H1 (cell line): ENCODE measurements at regions of chr2 and their contacts with region 1.

Region 1: GRCh38 chr2:98568881-98569793 is 39.2 kb downstream of the COA5 start:
- DNase-seq: peak; percentile 19 to 96
- H3K4me3 ChIP-seq: no peak overlapping the region
- H3K27ac ChIP-seq: no peak overlapping the region
- H3K4me1 ChIP-seq: no peaks in the 10 kb centered on the region
- H3K27me3 ChIP-seq: no peaks in the 10 kb centered on the region
- CTCF ChIP-seq: peak in 2 of 3 experiments; percentile 93 to 97; a peak in 3 of 4 replicates
- EP300 ChIP-seq: no peak
- POLR2A ChIP-seq: no peak
- RAD21 ChIP-seq: peak; percentile 59 to 69

Region 2: GRCh38 chr2:98583816-98584618 is 14.9 kb after region 1 on chr2:
- CTCF ChIA-PET with region 1: interaction called, 26 read pairs
- POLR2A ChIA-PET with region 1: no interaction called
- DNase-seq: peak in 1 of 2 experiments; percentile 40
- H3K4me3 ChIP-seq: no peak overlapping the region
- H3K27ac ChIP-seq: no peak overlapping the region
- H3K4me1 ChIP-seq: no peaks in the 10 kb centered on the region
- H3K27me3 ChIP-seq: no peaks in the 10 kb centered on the region
- CTCF ChIP-seq: no peak
- EP300 ChIP-seq: no peak
- POLR2A ChIP-seq: no peak
- RAD21 ChIP-seq: no peak

Region 3: DNA sequence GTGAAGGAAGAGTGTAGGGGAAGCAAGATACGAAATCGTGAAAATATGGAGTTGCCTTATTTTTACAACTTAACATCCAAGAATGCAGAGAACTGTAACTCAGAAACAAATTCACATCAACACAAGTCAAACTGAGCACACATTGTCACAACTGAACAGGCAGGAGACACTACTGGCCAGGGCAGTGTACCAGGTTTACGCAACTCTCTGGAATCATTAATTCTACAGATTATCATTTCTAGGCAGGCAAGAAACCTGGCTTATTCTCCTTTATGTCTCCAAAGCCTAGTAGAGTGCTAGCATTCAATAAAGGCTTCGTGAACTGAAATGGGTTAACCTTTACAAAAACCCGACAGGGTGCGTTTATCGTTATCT is 38.6 kb after region 1 on chr2:
- CTCF ChIA-PET with region 1: interaction called, 10 read pairs
- POLR2A ChIA-PET with region 1: no interaction called
- DNase-seq: no peak
- H3K4me3 ChIP-seq: peak overlapping the region; percentile 69 to 87 (median 80)
- H3K27ac ChIP-seq: peak overlapping the region; percentile 90
- H3K4me1 ChIP-seq: peaks cover 0 to 10% (median 4%) of the 10 kb centered on the region in 4 experiments; a peak in 2 of 7 replicates
- H3K27me3 ChIP-seq: no peaks in the 10 kb centered on the region
- CTCF ChIP-seq: no peak
- EP300 ChIP-seq: no peak
- POLR2A ChIP-seq: no peak
- RAD21 ChIP-seq: no peak